Activated T-helper 1 cell treated with anti-CD3 and anti-CD28 coated beads, Interleukin-12 subunit alpha, Interleukin-12 subunit beta, Interleukin-2, Interleukin-4 antibody, amounts not matched to agents 30 ng/mL and 10 ng/mL and 1 ng/mL, durations not matched to agents 14 hours and 24 hours and 36 hours (primary cell): ENCODE measurements at regions of chr17 and their contacts with region 1.

Region 1: GRCh38 chr17:76737082-76737675 is at the start of gene SRSF2:
- DNase-seq: peak; percentile 100
- H3K4me3 Mint-ChIP-seq: peak within 1 kb of the TSS; percentile 100
- H3K27ac Mint-ChIP-seq: peak within 1 kb of the TSS; percentile 99
- H3K4me1 Mint-ChIP-seq: peaks cover 49% of the 10 kb centered on the region
- H3K27me3 Mint-ChIP-seq: no peaks in the 10 kb centered on the region
- total RNA-seq, gene SRSF2: 535 and 541 TPM in 2 replicates

Region 2: DNA sequence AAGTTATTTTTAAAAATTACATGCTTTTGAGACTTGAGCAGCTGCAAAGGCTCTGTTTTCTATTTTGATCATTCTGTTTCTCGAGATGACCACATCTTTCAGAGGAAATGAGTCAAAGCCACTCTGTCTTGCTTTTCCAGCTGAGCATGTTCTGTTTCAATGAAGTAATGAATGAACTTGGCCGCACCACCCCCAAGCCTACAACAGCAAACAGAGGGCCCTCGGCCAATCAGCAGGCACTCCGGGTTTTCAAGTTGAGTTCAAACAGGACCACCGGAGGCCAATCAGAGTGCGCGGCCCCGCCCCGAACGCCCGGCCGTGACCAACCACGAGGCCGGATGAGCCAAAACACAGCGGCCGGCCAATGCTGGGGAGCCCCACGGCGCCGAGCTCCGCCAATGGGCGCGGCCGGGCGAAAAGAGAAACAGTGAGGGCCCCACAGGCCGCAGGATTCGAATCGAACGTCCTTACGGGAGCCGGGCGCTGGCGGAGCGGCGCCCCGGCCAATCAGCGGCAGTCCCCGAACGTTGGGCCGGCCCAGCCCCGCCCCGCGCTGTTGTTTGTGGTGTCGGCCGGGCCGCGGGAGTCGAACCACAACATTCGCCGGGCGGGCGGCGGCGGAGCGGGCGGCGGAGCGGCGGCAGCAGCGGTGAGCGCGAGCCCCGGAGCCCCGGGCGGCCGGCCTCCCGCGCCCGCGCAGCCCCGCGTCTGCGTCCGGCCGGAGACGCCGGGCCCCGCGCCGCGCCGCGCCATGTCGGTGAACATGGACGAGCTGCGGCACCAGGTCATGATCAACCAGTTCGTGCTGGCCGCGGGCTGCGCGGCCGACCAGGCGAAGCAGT is 472.2 kb before region 1 on chr17 and contains the start of gene UBALD2:
- intact Hi-C with region 1: loop called (anchors 5 kb)
- DNase-seq: peak; percentile 99
- H3K4me3 Mint-ChIP-seq: peak within 1 kb of the TSS; percentile 94
- H3K27ac Mint-ChIP-seq: peak within 1 kb of the TSS; percentile 94
- H3K4me1 Mint-ChIP-seq: peaks cover 63% of the 10 kb centered on the region
- H3K27me3 Mint-ChIP-seq: no peaks in the 10 kb centered on the region
- total RNA-seq, gene UBALD2: 206 and 217 TPM in 2 replicates

Region 3: DNA sequence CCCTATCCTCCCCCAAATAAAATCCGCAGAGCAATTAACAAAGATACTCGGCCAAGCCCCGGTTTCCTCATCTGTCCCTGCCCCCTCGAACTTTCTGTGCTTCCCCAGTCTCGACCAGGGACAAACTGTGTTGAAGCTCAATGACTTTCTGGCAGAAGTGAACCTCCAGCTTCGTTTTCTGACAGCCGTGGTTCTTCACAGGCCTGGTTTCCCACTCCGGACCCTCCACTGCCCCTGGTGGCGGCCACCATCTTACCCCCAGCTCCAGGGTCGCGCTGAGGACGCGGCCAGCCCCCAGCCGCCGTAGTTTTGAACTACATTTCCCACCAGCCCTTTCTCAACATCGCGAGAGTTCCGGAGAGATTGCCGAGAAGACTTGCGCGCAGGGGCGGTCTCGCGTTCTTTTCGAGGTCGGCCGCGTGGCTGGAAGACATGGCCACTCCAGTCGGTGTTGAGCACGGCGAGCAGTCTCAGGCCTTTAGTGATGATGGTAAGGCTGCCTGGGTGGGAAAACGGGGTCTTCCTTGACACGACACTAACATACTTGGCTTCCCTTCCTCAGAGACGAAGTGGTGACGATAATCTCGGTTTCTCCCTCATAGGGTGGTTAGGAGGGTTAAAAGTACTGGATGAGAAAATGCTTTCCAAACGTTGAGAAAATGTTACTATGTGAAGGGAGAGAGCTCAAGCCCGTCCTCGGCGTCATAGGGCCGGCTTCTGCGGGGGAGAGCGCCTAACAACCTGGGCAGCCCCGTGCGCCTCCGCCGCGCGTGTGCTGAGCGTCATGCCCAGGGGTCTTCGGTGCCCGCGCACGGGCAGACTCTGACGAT is 179.6 kb before region 1 on chr17:
- intact Hi-C with region 1: loop called (anchors 2 kb)
- DNase-seq: peak; percentile 93
- H3K4me3 Mint-ChIP-seq: peak overlapping the region; percentile 98
- H3K27ac Mint-ChIP-seq: peak overlapping the region; percentile 97
- H3K4me1 Mint-ChIP-seq: peaks cover 43% of the 10 kb centered on the region
- H3K27me3 Mint-ChIP-seq: no peaks in the 10 kb centered on the region

Region 4: DNA sequence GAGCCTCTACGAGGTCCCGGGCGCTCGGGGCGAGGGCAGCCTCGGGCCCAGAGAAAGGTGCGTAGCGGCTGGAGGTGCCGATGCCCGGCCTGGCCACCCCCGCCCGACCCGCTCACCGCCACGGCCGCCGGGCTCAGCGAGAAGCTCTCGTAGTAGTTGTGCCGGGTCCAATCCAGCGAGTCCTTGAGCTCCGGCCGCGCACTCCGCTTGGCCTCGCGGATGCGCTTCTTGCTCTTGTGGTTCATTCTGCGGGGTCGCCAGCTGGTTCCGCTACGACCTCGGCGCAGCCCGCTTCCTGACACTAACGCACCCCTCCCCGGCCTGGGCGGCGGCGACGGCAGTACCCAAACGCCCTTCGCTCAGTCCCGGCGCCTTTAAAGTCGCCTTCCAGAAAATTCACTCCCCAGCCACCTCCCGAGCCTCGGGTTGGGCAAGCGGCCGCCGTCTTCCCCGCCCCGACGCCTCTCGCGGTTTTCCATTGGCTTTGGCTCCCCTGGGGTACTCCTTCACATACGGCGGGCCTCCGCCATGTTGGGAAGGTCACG is 10.9 kb before region 1 on chr17 and contains the start of gene JMJD6:
- intact Hi-C with region 1: loop called (anchors 1 kb)
- DNase-seq: peak; percentile 95
- H3K4me3 Mint-ChIP-seq: peak within 1 kb of the TSS; percentile 95
- H3K27ac Mint-ChIP-seq: peak within 1 kb of the TSS; percentile 96
- H3K4me1 Mint-ChIP-seq: peaks cover 42% of the 10 kb centered on the region
- H3K27me3 Mint-ChIP-seq: no peaks in the 10 kb centered on the region
- total RNA-seq, gene JMJD6: 80.5 TPM in 2 replicates

Region 5: GRCh38 chr17:76791053-76791980 is 54.1 kb after region 1 on chr17:
- intact Hi-C with region 1: loop called (anchors 2 kb)
- DNase-seq: peak; percentile 51
- H3K4me3 Mint-ChIP-seq: peak overlapping the region; percentile 25
- H3K27ac Mint-ChIP-seq: peak overlapping the region; percentile 42
- H3K4me1 Mint-ChIP-seq: peaks cover 27% of the 10 kb centered on the region
- H3K27me3 Mint-ChIP-seq: no peaks in the 10 kb centered on the region

Region 6: DNA sequence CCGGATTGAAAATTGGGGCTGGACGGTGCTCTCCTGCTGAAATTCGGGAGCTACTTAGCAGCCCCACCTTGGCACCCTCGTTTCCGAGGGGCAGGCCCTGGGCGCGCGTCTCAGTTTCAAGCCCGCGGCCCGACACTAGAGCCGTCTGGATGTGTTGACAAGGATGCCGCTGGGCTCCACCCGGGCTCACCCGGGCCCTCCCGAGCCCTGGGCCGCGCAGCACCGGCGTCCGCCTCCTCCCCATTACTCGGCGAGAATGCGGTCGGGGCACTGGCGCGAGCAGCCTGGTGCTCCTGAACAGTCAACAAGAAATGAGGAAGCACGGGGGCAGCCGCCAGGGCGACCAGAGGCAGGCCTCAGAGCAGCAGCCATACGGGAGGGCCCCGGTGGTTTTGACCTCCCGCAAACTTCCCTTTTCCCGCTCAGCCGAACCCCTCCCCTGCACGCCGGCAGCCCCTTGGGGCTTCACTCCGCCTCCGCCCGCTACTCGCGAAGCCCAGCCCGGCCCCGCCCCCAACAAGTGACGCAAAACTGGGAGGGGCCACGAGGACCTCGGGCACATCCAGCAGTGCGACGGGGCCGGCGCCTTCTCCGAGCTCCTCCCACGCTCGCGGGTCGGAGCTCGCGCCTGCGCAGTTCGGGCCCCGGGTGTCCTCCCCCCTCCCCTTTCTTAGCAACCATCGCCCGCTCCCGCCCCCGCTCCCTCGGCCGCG is 403.1 kb after region 1 on chr17:
- intact Hi-C with region 1: no loop called
- DNase-seq: peak; percentile 99
- H3K4me3 Mint-ChIP-seq: peak overlapping the region; percentile 74
- H3K27ac Mint-ChIP-seq: peak overlapping the region; percentile 96
- H3K4me1 Mint-ChIP-seq: peaks cover 64% of the 10 kb centered on the region
- H3K27me3 Mint-ChIP-seq: peaks cover 2% of the 10 kb centered on the region

Region 7: DNA sequence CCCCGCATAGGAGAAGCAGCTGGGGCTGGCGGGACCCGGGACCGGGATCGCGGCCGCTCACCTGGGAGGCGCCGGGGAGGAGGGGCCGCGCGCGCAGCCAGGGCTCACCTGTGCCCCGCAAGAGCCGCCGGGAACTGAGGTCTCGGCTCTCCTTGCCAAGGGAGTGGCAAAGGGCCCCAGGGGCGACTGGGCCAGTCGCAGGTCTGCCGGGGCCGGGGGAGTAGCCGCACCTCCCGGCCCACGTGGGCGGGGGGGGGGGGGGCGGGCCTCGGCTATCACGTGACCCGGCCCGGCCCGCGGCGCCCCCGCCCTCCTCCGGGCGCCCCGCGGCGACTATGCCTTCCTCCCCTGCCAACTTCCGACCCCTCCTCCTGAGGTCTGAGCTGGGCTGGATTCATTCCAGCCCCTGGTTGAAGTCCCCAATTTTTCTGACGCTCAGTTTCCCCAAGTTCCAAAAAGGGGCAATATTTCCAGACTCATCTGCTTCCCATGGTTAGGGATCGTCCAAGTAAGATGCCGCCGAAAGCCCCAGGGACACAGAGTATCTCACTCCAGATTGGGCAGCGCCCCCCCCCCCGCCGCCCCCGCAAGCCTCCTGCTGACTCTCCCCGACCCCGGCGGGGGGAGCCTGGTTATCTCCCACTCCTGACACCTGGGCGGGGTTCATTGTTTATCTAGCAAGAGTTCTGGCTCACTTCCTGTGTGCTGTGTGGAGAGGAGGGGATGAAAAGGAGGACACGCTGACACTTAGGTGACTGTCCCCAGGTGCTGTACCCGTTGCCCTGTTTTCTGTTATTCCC is 1391.6 kb after region 1 on chr17 and contains the start of gene TMC6:
- intact Hi-C with region 1: loop called (anchors 2 kb)
- DNase-seq: peak; percentile 56
- H3K4me3 Mint-ChIP-seq: peak within 1 kb of the TSS; percentile 98
- H3K27ac Mint-ChIP-seq: peak within 1 kb of the TSS; percentile 99
- H3K4me1 Mint-ChIP-seq: peaks cover 44% of the 10 kb centered on the region
- H3K27me3 Mint-ChIP-seq: no peaks in the 10 kb centered on the region
- total RNA-seq, gene TMC6: 265 and 268 TPM in 2 replicates